ENCODE measurements at regions of chr11 and their contacts with region 1.

Region 1: DNA sequence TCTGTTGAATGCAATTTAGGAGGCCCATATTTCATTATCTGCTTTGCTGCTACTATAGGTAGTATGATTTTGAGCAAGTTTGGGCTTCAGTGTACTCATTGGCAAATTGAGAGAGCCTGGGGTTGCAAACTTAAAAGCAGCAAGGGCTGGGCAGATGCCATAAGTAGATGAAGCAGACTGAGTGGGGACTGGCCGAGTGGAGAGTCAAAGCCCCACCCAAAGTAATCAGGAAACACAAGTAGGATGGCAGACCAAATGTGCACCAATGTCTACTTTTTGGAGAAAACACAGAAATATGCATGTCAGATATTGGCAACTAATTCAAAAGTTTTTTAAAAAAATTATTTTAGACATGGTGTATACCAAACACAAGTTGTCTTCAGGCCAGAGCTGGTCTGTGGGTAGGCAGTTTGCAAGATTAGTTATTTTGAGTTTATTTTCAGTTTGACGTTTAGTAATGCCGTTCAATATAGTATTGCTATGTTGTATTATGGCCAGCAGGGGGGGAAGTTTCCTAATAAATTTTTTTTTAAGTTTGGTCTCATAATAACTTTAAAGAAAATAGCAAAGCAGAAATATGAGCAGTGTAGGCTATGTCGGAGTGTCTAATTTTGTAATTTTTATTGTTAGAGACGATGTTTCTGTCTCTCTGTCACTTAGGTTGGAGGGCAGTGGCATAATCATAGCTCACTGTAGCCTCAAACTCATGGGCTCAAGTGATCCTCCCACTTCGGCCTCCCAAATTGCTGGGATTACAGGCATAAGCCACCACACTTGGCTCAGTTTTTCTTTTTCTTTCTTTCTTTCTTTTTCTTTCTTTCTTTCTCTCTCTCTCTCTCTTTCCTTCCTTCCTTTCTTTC is 105.1 kb downstream of the HIPK3 start:
- DNase-seq: no peak
- ATAC-seq: peak; percentile 41

Region 2: DNA sequence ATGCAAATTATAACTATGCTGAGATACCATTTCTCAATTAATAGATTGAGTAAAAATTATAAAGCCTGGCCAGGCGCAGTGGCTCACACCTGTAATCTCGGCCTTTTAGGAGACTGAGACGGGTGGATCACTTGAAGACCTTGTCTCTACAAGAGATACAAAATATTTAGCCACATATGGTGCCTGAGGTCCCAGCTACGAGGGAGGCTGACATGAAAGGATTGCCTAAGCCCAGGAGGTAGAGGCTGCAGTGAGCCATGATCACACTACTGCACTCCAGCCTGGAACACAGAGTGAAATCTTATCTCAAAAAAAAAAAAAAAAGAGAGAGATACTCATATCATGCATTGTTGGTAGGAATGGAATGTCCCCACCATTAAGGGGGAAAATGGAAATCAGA is 1129.0 kb before region 1 on chr11:
- intact Hi-C with region 1: no loop called
- DNase-seq: no peak
- ATAC-seq: no peak

Region 3: GRCh38 chr11:33015621-33016551 is 346.4 kb before region 1 on chr11 and contains the start of gene DEPDC7:
- intact Hi-C with region 1: no loop called
- DNase-seq: peak; percentile 94
- ATAC-seq: peak; percentile 99
- total RNA-seq, gene DEPDC7: 12.3 TPM

Region 4: DNA sequence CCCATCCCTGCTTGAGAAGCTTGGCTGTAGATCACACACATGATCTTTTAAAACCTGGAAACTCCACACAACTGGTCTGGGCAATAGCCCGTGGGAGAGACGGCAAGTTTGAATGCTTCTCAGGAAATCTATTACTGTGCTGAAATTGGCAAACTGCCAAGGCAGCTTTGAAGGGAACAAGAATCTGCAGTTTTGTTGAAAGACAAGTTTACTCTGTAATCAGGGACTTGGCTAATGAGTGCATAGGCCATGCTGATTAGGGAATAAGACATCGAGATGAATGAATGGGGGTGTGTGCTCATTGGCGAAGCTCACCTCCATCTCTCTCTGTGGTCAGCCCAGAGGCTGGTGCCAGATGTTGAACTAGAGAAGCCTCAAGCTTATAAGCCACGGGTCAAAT is 113.7 kb after region 1 on chr11:
- intact Hi-C with region 1: no loop called
- DNase-seq: no peak
- ATAC-seq: peak; percentile 67

Region 5: DNA sequence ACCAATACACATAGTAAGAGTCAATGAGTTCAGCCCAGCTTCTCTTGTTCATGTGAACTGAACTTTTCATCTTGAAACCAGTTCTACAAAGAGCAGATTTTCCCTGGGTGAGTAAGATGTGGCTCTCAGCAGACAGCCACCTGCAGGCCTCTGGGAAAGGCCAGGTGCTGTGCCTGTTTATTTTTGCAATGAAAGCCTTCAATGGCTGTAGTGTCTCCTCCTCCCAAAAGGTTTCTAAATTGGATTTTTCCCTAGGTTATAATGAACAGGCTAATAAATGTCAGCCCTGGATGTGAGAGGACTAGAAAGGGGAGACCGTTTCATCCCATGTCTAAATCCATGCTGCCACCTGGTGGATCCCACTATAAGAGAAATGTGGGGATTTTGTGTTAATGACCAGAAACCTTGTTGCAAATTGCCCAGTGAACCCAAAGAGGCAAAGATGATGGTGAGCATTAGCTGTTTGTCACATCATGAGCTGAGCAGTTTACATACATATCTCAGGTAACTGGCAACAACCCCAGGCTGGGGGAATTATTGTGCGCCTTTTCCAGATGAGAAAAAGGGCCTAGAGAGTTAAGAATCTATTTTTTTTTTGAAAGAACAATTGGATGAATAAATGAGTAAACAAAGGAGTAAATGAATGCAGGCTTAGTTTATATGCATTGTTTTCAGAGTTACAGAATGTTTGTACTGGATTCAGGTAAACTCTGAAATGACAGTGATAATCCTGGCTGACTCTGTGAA is 325.6 kb after region 1 on chr11:
- intact Hi-C with region 1: loop called (anchors 5 kb)
- DNase-seq: no peak
- ATAC-seq: no peak

Region 6: GRCh38 chr11:33741806-33742205 is 379.5 kb after region 1 on chr11:
- intact Hi-C with region 1: loop called (anchors 2 kb)
- DNase-seq: no peak
- ATAC-seq: no peak